ENCODE measurements at regions of chr3 and their contacts with region 1.

Region 1: GRCh38 chr3:33074217-33075067 is 22.5 kb downstream of the GLB1 start:
- DNase-seq: peak; percentile 79
- H3K4me3 Mint-ChIP-seq: no peak overlapping the region
- H3K27ac Mint-ChIP-seq: no peak overlapping the region
- H3K4me1 Mint-ChIP-seq: peaks cover 44% of the 10 kb centered on the region
- H3K27me3 Mint-ChIP-seq: no peaks in the 10 kb centered on the region

Region 2: DNA sequence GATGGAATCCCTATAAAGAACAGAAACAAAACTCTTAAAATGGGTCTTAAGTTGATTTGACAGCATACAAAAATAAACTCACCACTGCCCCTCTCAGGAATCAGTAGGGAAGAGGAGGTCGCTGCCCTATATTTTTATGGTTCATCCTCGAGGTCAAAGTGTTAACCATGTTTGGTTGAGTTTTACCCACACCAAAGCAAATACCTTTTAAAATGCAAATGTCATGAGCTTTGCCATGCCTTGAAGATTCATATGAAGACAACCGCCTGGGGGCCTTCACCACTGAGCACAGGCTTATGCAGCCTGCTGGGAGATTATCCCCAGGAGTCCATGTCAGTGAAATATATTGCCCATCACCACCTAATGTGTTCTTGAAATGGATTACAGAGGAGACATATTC is 43.6 kb before region 1 on chr3:
- CTCF ChIA-PET with region 1: interaction called, 29 read pairs
- DNase-seq: peak; percentile 53
- H3K4me3 Mint-ChIP-seq: no peak overlapping the region
- H3K27ac Mint-ChIP-seq: no peak overlapping the region
- H3K4me1 Mint-ChIP-seq: peaks cover 33% of the 10 kb centered on the region
- H3K27me3 Mint-ChIP-seq: no peaks in the 10 kb centered on the region

Region 3: DNA sequence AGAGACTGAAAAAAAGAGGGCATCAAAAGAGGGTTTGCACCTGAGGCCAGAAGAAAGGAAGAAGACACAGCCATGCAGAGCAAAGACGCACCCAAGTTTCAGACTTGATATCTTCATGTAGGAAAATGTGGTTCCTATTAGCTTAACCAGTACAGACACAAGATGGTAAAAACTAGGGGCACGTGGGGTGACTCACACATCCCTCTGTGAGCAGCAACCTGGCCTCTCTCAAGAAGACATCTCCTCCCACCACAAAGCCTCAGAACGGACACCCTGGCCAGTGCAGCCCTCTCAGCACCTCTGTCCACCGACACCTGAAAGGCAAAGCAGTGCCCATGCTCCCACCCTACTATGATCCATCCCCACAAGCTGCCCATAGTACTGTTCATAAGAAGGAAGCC is 10.8 kb before region 1 on chr3:
- CTCF ChIA-PET with region 1: interaction called, 28 read pairs
- DNase-seq: peak; percentile 74
- H3K4me3 Mint-ChIP-seq: peak overlapping the region; percentile 35
- H3K27ac Mint-ChIP-seq: peak overlapping the region; percentile 89
- H3K4me1 Mint-ChIP-seq: peaks cover 73% of the 10 kb centered on the region
- H3K27me3 Mint-ChIP-seq: no peaks in the 10 kb centered on the region